ENCODE measurements at regions of chrX and their contacts with region 1.

Region 1: DNA sequence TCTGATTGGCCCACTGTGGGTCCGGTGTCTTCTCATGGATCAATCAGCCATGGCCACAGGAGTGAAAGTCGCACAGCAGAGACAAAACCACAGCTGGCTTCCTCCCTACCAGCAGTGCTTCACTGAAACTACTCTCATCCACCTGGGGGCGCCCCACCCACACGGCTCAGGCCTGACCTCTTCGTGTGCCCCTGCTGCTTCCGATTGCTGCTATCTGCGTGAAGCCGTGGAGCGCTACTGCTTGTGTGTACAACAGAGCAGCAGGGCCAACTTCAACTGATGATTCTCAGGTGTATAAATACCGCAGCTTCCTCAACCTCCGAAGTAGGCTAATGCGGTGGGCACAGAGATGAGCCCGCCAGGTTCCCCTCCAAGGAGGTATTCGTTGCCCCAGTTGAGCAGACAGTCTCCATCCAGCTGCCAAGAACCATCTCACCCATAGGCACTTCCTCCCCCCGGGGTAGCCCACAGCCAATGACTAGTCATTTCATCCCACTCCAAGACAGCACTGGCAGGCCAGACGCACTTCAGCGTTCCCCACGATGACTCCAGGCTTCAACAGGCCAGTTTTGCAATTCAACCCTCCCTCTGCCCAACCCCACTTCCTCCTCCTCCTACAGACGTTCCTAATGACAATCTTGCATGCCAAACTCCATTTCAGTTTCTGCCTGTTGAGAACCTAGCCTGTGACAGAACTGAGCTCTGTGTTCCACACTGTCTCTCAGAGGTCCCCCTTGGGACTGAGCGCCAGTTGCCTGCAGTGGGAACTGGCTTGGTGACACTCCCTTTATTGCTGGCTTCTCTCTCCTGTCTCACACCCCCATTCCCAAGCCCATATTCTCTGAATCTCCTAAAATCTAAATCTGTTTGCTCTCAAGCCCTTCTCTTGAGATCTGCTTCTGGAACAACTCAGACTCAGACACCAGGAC is 41.3 kb upstream of the ATP6AP2 start:
- DNase-seq: peak; percentile 67
- H3K4me3 ChIP-seq: no peak overlapping the region
- H3K27ac ChIP-seq: peak overlapping the region in 1 of 4 donors; percentile 27
- H3K4me1 ChIP-seq: peaks cover 0 to 17% (median 5%) of the 10 kb centered on the region in 4 donors
- H3K27me3 ChIP-seq: no peaks in the 10 kb centered on the region
- CTCF ChIP-seq: no peak
- EP300 ChIP-seq: no peak
- POLR2A ChIP-seq: no peak

Region 2: DNA sequence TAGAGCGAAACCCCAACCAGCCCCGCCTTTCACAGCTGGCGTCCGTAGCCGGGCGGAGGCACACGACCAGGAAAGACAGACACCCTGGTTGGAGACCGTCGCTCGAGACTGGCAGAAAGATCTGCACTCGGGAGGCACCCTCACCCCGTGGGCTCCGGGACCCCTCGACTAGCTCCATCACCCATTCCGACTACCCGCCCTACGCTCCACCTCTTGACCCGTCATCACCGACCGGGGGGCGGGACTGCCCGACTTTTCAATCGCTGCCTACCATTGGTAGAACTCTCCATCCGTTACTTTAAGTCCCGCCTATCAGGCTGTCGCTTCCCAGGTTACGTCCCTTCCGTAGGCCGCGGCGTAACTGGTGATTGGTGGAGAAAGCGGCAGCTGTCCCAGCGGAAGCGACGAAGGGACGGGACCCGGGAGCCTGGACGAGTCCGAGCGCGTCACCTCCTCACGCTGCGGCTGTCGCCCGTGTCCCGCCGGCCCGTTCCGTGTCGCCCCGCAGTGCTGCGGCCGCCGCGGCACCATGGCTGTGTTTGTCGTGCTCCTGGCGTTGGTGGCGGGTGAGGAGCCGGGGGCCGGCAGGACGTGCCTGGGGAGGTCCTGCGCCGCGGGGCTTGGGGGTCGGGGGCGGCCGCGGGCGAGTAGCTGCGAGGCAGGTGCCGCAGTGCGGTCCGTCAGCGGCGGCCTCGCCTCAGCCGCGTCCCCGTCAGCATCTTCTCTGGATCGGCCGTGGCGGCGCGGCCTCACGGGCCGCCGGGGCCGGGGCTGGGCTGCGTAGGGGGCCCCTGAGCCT is 41.3 kb after region 1 on chrX and contains the start of gene ATP6AP2:
- intact Hi-C with region 1: loop called (anchors 5 kb)
- DNase-seq: peak; percentile 96
- H3K4me3 ChIP-seq: peak within 1 kb of the TSS; percentile 56 to 86 (median 82)
- H3K27ac ChIP-seq: peak within 1 kb of the TSS; percentile 90 to 98 (median 93)
- H3K4me1 ChIP-seq: peaks cover 0 to 10% (median 8%) of the 10 kb centered on the region in 4 donors
- H3K27me3 ChIP-seq: no peaks in the 10 kb centered on the region
- CTCF ChIP-seq: no peak
- EP300 ChIP-seq: no peak
- POLR2A ChIP-seq: peak; percentile 54 to 56
- total RNA-seq, gene ATP6AP2: 86.4 to 121 (median 101) TPM

Region 3: GRCh38 chrX:40816906-40817305 is 277.4 kb after region 1 on chrX:
- intact Hi-C with region 1: no loop called
- DNase-seq: no peak
- H3K4me3 ChIP-seq: no peak overlapping the region
- H3K27ac ChIP-seq: no peak overlapping the region
- H3K4me1 ChIP-seq: no peaks in the 10 kb centered on the region
- H3K27me3 ChIP-seq: no peaks in the 10 kb centered on the region
- CTCF ChIP-seq: no peak
- EP300 ChIP-seq: no peak
- POLR2A ChIP-seq: no peak